HepG2 (cell line): ENCODE measurements at regions of chr16 and their contacts with region 1.

Region 1: GRCh38 chr16:18983565-18984424 is at the start of gene TMC7:
- DNase-seq: peak; percentile 91
- ATAC-seq: peak; percentile 99
- H3K4me3 ChIP-seq: peak within 1 kb of the TSS; percentile 60 to 85 (median 79)
- H3K27ac ChIP-seq: no peak within 1 kb of the TSS
- H3K4me1 ChIP-seq: peaks cover 44% of the 10 kb centered on the region
- H3K27me3 ChIP-seq: peaks cover 1 to 17% of the 10 kb centered on the region in 2 experiments; a peak in 4 of 5 replicates
- CTCF ChIP-seq: peak; percentile 99
- EP300 ChIP-seq: no peak
- POLR2A ChIP-seq: no peak
- RAD21 ChIP-seq: peak; percentile 100
- total RNA-seq, gene TMC7: 1.2 TPM in 2 replicates

Region 2: GRCh38 chr16:18953547-18953946 is 30.2 kb before region 1 on chr16:
- CTCF ChIA-PET with region 1: no interaction called
- POLR2A ChIA-PET with region 1: no interaction called
- in situ Hi-C with region 1: no loop called
- intact Hi-C with region 1: no loop called
- DNase-seq: no peak
- ATAC-seq: no peak
- H3K4me3 ChIP-seq: no peak overlapping the region
- H3K27ac ChIP-seq: no peak overlapping the region
- H3K4me1 ChIP-seq: peaks cover 30% of the 10 kb centered on the region
- H3K27me3 ChIP-seq: no peaks in the 10 kb centered on the region
- CTCF ChIP-seq: no peak
- EP300 ChIP-seq: no peak
- POLR2A ChIP-seq: no peak
- RAD21 ChIP-seq: no peak

Region 3: DNA sequence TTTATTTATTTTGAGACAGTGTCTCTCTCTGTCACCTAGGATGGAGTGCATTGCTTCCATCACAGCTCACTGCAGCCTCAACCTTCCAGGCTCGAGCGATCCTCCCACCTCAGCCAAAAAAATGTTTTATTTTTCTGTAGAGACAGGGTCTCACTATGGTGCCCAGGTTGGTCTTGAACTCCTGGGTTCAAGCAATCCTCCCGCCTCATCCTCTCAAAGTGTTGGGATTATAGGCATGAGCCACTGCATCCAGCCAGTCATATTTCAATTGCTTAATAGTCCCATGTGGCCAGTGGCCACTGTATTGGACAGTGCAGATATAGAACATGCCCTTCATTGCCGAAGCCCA is 15.2 kb after region 1 on chr16:
- CTCF ChIA-PET with region 1: interaction called, 4 read pairs
- POLR2A ChIA-PET with region 1: interaction called, 11 read pairs
- in situ Hi-C with region 1: no loop called
- intact Hi-C with region 1: no loop called
- DNase-seq: no peak
- ATAC-seq: peak; percentile 9
- H3K4me3 ChIP-seq: no peak overlapping the region
- H3K27ac ChIP-seq: no peak overlapping the region
- H3K4me1 ChIP-seq: peaks cover 65% of the 10 kb centered on the region
- H3K27me3 ChIP-seq: no peaks in the 10 kb centered on the region
- CTCF ChIP-seq: no peak
- EP300 ChIP-seq: no peak
- POLR2A ChIP-seq: 0 out of 4 replicates have a peak, but pooled peaks of 1 of the 2 experiments have one; percentile 0
- RAD21 ChIP-seq: no peak

Region 4: DNA sequence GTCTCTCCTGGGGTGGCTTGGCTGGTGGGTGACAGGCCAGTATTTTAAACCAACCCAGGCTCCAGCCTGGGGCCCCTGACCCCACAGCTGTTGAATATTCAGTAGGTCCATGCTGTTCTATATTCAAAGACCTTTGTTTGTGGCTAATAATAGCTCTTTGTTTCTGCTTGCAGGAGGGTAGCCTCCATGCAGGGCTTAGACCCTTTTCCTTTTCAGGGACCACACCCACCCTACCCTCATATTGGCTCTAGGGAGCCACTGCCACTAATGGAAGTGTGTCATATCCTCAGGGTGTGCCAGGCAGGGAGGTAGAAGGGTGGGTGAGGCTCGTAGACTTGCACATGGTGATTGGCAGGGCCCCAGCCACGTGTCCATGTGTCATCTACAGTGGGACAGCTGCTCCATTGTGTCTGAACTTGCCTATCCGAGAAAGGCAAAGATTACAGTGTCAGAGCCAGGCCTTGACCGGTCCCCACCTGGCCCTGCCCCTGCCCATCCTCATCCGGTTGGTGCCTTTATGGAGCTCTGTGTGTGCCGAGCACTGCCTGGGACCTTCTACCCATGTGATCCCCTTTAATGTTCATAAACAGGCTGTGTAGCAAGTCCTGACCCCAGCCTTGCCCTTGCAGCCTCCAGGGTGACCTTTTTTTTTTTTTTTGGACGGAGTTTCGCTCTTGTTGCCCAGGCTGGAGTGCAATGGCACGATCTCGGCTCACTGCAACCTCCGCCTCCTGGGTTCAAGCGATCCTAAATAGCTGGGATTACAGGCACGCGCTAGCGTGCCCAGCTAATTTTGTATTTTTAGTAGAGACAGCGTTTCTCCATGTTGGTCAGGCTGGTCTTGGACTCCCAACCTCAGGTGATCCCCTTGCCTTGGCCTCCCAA is 22.0 kb after region 1 on chr16:
- CTCF ChIA-PET with region 1: interaction called, 16 read pairs
- POLR2A ChIA-PET with region 1: interaction called, 13 read pairs
- in situ Hi-C with region 1: no loop called
- intact Hi-C with region 1: no loop called
- DNase-seq: peak; percentile 100
- ATAC-seq: peak; percentile 97
- H3K4me3 ChIP-seq: peak overlapping the region in 1 of 3 experiments; percentile 35; a peak in 2 of 6 replicates
- H3K27ac ChIP-seq: peak overlapping the region; percentile 52
- H3K4me1 ChIP-seq: peaks cover 79% of the 10 kb centered on the region
- H3K27me3 ChIP-seq: no peaks in the 10 kb centered on the region
- CTCF ChIP-seq: peak; percentile 26
- EP300 ChIP-seq: peak; percentile 75 to 80; a peak in 3 of 4 replicates
- POLR2A ChIP-seq: peak; percentile 27 to 53; a peak in 3 of 4 replicates
- RAD21 ChIP-seq: no peak; the same call in 1 of the 2 replicates

Region 5: DNA sequence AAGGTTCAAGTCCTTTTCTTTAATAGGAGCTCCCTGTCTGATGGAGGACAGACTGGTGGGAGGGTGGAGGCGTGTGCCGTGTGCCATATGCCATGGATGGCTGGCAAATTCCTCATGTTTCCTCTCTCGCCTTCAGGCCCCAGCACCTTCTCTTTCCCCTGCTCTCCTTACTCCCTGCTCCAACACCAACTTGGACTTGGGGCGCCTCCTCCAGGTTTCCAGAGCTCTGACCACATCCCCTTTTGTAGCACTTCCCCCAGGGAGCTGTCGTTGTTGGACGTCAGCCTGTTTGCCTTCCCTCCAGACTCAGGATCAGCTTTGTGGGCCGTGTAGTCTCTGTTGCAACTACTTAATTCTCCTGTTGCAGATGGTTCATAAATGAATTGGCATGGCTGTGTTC is 30.7 kb after region 1 on chr16:
- CTCF ChIA-PET with region 1: interaction called, 20 read pairs
- POLR2A ChIA-PET with region 1: no interaction called
- in situ Hi-C with region 1: loop called (anchors 5 kb)
- intact Hi-C with region 1: no loop called
- DNase-seq: peak; percentile 41
- ATAC-seq: peak; percentile 55
- H3K4me3 ChIP-seq: no peak overlapping the region
- H3K27ac ChIP-seq: no peak overlapping the region
- H3K4me1 ChIP-seq: no peaks in the 10 kb centered on the region
- H3K27me3 ChIP-seq: no peaks in the 10 kb centered on the region
- CTCF ChIP-seq: peak; percentile 60
- EP300 ChIP-seq: no peak
- POLR2A ChIP-seq: no peak
- RAD21 ChIP-seq: no peak

Region 6: GRCh38 chr16:19114352-19115052 is 130.7 kb after region 1 on chr16:
- CTCF ChIA-PET with region 1: no interaction called
- POLR2A ChIA-PET with region 1: no interaction called
- in situ Hi-C with region 1: no loop called
- intact Hi-C with region 1: no loop called
- DNase-seq: no peak
- ATAC-seq: peak; percentile 37
- H3K4me3 ChIP-seq: peak overlapping the region; percentile 73 to 88 (median 78); a peak in 5 of 6 replicates
- H3K27ac ChIP-seq: peak overlapping the region; percentile 74
- H3K4me1 ChIP-seq: peaks cover 82% of the 10 kb centered on the region
- H3K27me3 ChIP-seq: no peaks in the 10 kb centered on the region
- CTCF ChIP-seq: no peak
- EP300 ChIP-seq: no peak
- POLR2A ChIP-seq: no peak
- RAD21 ChIP-seq: no peak

Region 7: DNA sequence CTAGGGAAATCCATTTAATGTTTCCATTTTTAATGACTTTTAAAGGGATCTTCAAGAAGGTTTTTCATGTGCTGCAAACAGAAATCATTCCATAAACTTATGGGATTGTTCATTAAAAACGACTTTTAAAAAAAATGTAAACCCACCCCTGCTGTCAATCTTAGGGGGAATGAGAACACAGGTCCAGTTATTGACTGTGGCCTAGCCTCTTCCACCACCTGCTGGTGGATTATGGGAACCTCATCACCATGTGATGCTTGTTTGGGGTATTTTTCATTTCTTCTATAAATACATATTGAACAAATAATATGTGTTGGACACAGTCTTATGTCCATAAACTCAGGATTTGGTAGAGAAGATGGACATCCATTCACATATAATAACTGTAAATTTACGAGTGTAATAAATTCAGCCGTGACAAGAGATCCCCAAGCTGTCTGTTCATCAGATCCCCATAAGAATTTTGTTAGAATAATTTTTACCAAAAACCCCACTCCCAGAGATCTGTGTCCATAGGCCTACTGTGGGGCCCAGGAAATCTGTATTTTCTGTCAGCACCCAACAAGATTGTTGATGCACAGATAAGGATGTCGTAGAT is 391.9 kb after region 1 on chr16:
- CTCF ChIA-PET with region 1: interaction called, 9 read pairs
- POLR2A ChIA-PET with region 1: no interaction called
- in situ Hi-C with region 1: loop called (anchors 10 kb)
- intact Hi-C with region 1: loop called (anchors 2 kb)
- DNase-seq: peak; percentile 60
- ATAC-seq: peak; percentile 83
- H3K4me3 ChIP-seq: no peak overlapping the region
- H3K27ac ChIP-seq: no peak overlapping the region
- H3K4me1 ChIP-seq: peaks cover 13% of the 10 kb centered on the region
- H3K27me3 ChIP-seq: 0 out of 5 replicates have a peak, but pooled peaks cover 1 to 4% of the 10 kb centered on the region in 2 experiments
- CTCF ChIP-seq: peak; percentile 92
- EP300 ChIP-seq: no peak
- POLR2A ChIP-seq: no peak
- RAD21 ChIP-seq: peak; percentile 90